Spleen (tissue), 13 donors: ENCODE measurements at regions of chr16 and their contacts with region 1.

Region 1: GRCh38 chr16:21656795-21657768 is 4.7 kb upstream of the IGSF6 start:
- DNase-seq: no peak
- H3K4me3 ChIP-seq: peak overlapping the region in 1 of 8 donors; percentile 20
- H3K27ac ChIP-seq: peak overlapping the region; percentile 37 to 89 (median 74)
- H3K4me1 ChIP-seq: peaks cover 16 to 100% (median 77%) of the 10 kb centered on the region in 6 donors
- H3K27me3 ChIP-seq: no peaks in the 10 kb centered on the region
- CTCF ChIP-seq: peak; percentile 56 to 90 (median 81)
- POLR2A ChIP-seq: no peak

Region 2: GRCh38 chr16:21708533-21709115 is 51.5 kb after region 1 on chr16:
- intact Hi-C with region 1: loop called (anchors 5 kb)
- DNase-seq: peak; percentile 78
- H3K4me3 ChIP-seq: no peak overlapping the region
- H3K27ac ChIP-seq: no peak overlapping the region
- H3K4me1 ChIP-seq: peaks cover 0 to 20% (median 10%) of the 10 kb centered on the region in 6 donors
- H3K27me3 ChIP-seq: peaks cover 0 to 6% (median 0%) of the 10 kb centered on the region in 7 donors
- CTCF ChIP-seq: peak; percentile 71 to 92 (median 84)
- POLR2A ChIP-seq: no peak

Region 3: GRCh38 chr16:21727344-21727743 is 70.3 kb after region 1 on chr16:
- intact Hi-C with region 1: no loop called
- DNase-seq: no peak
- H3K4me3 ChIP-seq: no peak overlapping the region
- H3K27ac ChIP-seq: no peak overlapping the region
- H3K4me1 ChIP-seq: no peaks in the 10 kb centered on the region
- H3K27me3 ChIP-seq: no peaks in the 10 kb centered on the region
- CTCF ChIP-seq: no peak
- POLR2A ChIP-seq: no peak